ENCODE measurements at regions of chr3 and their contacts with region 1.

Region 1: GRCh38 chr3:178255315-178255714 is 280.9 kb upstream of the KCNMB2 start:
- DNase-seq: peak; percentile 98
- H3K4me3 ChIP-seq: no peak overlapping the region
- H3K27ac ChIP-seq: peak overlapping the region; percentile 62
- H3K4me1 ChIP-seq: peaks cover 15% of the 10 kb centered on the region
- H3K27me3 ChIP-seq: no peaks in the 10 kb centered on the region
- CTCF ChIP-seq: no peak
- POLR2A ChIP-seq: peak; percentile 49

Region 2: DNA sequence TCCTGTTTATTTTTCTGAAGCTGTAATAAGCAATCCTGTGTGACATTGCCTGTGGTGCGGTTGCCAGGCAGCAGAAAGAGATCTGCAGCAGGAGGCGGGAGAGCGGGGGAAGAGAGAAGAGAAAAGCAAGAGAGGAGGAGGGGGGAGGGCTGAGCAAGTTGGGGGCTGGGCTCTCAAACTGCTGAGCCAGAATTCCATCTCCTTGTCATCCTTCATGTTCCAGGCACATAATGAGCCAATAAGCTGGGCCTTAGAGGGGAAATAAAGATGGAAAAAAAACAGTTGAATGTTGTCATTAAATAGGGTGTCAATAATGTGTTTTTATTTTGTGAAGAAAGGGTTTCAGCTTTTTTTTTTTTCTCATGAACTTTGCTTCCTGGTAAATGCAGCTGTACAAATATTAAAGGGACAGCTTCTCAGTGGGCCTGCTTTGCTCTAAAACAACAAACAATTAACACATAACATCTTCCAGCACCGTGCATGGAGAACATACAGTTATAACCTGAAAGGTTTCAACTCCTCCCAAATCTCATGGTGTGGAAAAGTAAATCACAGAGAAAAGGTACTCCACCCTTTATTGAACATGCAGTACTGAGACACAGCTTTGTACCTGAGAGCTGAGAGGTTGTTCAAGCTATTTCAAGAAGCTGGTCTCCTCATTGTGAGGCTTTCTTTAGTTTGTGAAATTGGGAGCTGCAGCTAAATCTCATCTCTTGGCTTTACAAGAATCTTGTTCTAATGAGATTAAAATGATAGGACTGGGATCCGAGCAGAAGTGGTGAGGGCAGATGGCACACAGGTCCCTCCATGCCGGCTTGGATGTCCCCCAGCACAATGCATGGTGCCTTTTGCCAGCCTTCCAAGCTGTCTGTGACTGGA is 170.1 kb before region 1 on chr3:
- CTCF ChIA-PET with region 1: interaction called, 5 read pairs
- POLR2A ChIA-PET with region 1: no interaction called
- dilution Hi-C with region 1: no loop called
- intact Hi-C with region 1: loop called (anchors 5 kb)
- DNase-seq: peak; percentile 86
- H3K4me3 ChIP-seq: no peak overlapping the region
- H3K27ac ChIP-seq: peak overlapping the region; percentile 8
- H3K4me1 ChIP-seq: peaks cover 24% of the 10 kb centered on the region
- H3K27me3 ChIP-seq: no peaks in the 10 kb centered on the region
- CTCF ChIP-seq: no peak
- POLR2A ChIP-seq: no peak

Region 3: DNA sequence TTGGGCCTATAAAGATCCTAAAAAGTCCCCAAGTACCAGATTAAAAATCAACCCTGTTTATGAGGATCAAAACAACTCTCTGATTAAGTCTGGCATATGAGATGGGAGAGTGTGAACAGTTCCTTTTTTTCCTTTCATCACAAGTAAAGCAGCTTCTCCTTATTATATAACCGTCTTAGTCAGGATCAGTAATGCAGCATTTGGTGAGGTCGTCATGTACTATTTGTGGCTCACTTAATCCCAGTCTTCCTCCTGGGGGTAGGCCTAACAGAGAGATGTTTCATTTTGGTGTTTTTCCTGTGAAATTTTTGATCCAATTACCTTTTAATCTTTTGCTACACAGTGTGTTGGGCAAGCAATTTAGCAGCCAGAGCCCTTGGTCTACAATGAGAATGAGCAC is 52.1 kb before region 1 on chr3:
- CTCF ChIA-PET with region 1: interaction called, 3 read pairs
- POLR2A ChIA-PET with region 1: no interaction called
- dilution Hi-C with region 1: no loop called
- intact Hi-C with region 1: loop called (anchors 2 kb)
- DNase-seq: no peak
- H3K4me3 ChIP-seq: no peak overlapping the region
- H3K27ac ChIP-seq: no peak overlapping the region
- H3K4me1 ChIP-seq: peaks cover 14% of the 10 kb centered on the region
- H3K27me3 ChIP-seq: no peaks in the 10 kb centered on the region
- CTCF ChIP-seq: no peak
- POLR2A ChIP-seq: no peak

Measured in endothelial cell of umbilical vein (primary cell).